Heart left ventricle (tissue), 16 donors: ENCODE measurements at regions of chr13 and their contacts with region 1.

Region 1: GRCh38 chr13:37109051-37109678 is 3.7 kb upstream of the CSNK1A1L start:
- DNase-seq: no peak
- ATAC-seq: peak; percentile 52 to 74 (median 58)
- H3K4me3 ChIP-seq: no peak overlapping the region
- H3K27ac ChIP-seq: no peak overlapping the region
- H3K4me1 ChIP-seq: peaks cover 0 to 7% (median 0%) of the 10 kb centered on the region in 12 donors
- H3K27me3 ChIP-seq: no peaks in the 10 kb centered on the region
- CTCF ChIP-seq: peak; percentile 38 to 83 (median 69)
- POLR2A ChIP-seq: no peak

Region 2: DNA sequence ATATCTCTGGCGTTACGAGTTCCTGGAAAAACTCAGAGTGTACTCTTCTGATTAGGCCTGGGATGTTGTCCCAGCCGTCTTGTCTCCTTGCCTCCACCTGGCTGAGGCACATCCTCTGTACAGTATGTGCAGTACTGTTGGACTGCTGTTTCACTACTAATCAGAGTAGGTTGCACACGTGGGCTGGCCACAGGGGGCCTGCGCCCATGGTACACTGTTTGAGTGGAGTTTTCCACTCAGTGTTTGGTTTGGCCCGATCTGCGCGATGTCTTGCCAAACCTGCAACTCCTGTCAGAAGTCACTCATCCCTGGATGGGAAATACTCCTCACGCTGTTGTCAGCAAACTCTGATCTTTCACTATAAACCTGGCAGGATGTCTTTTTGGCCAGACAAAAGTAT is 185.9 kb after region 1 on chr13:
- intact Hi-C with region 1: loop called in 1 of 10 experiments (anchors 10 kb)
- DNase-seq: peak; percentile 22 to 73 (median 48)
- ATAC-seq: peak; percentile 94 to 98 (median 97)
- H3K4me3 ChIP-seq: no peak overlapping the region
- H3K27ac ChIP-seq: peak overlapping the region in 5 of 12 donors; percentile 14 to 41 (median 27)
- H3K4me1 ChIP-seq: peaks cover 0 to 6% (median 0%) of the 10 kb centered on the region in 12 donors
- H3K27me3 ChIP-seq: no peaks in the 10 kb centered on the region
- CTCF ChIP-seq: no peak
- POLR2A ChIP-seq: no peak

Region 3: DNA sequence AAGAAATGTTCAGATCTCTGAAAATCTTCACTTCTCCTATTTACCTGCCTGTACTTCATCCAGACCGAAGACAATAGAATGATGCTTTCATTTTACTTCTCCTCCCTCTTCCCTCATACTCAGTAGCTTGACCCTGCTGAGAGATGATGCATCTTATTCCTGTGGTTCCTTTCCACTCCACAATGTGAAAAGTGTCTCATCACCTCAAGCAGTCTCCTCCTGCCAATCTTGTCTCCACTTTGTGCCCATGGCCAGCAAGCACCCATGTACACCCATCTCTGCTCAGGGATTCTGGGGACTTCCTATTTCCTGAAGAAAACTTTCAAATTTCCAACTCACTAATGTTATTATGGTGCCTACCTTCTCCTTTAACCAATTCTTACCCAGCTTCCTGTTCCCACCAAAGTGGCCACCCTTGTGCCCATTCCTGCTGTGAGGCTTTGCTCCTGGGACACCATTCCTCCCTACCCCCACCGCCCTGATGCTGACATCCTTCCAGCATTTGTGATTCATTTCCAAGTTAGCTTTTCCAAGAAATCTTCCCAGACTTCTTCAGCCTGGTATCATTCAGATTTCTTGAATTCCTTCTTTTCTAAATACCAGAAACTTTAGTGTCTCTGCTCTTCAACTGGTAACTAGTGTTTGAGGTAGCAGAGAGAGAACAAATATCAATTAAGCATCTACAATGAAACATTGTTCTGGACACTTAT is 276.9 kb after region 1 on chr13:
- intact Hi-C with region 1: no loop called
- DNase-seq: no peak
- ATAC-seq: no peak
- H3K4me3 ChIP-seq: no peak overlapping the region
- H3K27ac ChIP-seq: no peak overlapping the region
- H3K4me1 ChIP-seq: no peaks in the 10 kb centered on the region
- H3K27me3 ChIP-seq: no peaks in the 10 kb centered on the region
- CTCF ChIP-seq: no peak
- POLR2A ChIP-seq: no peak

Region 4: DNA sequence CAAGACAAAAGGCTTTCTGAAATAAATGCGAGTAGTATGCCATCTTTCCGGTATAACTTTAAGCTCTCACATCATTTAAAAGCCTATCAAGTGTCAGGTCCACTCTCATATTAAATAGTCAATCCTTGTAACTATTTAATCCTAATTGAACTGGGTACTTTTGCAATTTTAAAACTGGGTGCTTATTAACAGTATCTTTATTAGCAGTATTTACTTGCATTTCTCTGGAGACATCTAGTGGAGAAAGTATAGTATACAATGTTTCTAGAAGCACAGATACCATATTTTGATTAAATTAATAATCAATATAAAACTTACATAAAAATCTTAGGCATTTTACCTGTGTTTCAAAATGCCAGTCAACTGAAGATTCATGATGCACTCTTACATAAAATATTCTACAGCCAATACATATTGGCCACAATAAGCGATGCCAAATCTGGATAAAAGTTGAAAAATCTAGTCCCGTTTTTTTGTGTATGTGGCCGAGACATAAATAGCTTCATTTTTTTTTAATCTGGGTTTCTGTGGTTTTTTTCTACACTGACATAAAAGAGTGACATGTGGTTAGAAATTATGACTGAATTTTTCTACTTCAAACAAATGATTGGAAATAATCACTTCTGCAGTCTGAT is 493.7 kb after region 1 on chr13:
- intact Hi-C with region 1: loop called (anchors 1 to 2 kb)
- DNase-seq: no peak
- ATAC-seq: peak in 1 of 4 donors; percentile 63
- H3K4me3 ChIP-seq: no peak overlapping the region
- H3K27ac ChIP-seq: no peak overlapping the region
- H3K4me1 ChIP-seq: peaks cover 0 to 15% (median 0%) of the 10 kb centered on the region in 12 donors
- H3K27me3 ChIP-seq: no peaks in the 10 kb centered on the region
- CTCF ChIP-seq: peak; percentile 36 to 75 (median 66)
- POLR2A ChIP-seq: no peak